Activated CD4-positive, alpha-beta T cell treated with anti-CD3 and anti-CD28 coated beads, Interleukin-2, amount 10 ng/mL, durations not matched to agents 7 days and 5 days (primary cell): ENCODE measurements at regions of chr7 and their contacts with region 1.

Region 1: DNA sequence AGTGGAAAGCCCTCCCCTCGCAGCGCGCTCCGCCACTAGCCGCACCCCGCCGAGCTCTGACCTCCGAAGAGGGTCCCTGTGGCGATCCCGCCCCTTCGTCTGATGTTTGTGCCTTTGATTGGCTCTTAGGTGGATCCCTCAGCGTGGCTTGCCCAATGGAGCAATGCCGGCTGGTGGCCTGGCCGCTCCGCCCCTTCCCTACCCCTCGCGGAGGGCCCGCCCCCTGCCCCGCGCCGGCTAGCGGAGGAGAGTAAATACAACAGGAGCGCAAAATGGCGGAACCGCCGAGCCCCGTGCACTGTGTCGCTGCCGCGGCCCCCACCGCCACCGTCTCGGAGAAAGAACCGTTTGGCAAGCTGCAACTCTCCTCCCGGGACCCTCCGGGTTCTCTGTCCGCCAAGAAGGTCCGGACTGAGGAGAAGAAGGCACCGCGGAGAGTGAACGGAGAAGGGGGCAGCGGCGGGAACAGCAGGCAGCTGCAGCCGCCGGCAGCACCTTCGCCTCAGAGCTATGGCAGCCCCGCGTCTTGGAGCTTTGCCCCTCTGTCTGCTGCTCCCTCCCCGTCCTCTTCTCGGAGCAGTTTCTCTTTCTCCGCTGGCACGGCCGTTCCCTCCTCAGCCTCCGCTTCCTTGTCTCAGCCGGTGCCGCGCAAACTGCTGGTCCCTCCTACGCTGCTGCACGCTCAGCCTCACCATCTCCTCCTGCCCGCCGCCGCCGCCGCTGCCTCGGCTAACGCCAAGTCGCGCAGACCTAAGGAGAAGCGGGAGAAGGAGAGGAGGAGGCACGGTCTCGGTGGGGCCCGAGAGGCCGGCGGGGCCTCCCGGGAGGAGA is at the start of gene RSBN1L:
- DNase-seq: peak; percentile 98
- H3K4me3 Mint-ChIP-seq: peak within 1 kb of the TSS; percentile 99
- H3K27ac Mint-ChIP-seq: peak within 1 kb of the TSS; percentile 98
- H3K4me1 Mint-ChIP-seq: peaks cover 53% of the 10 kb centered on the region
- H3K27me3 Mint-ChIP-seq: no peaks in the 10 kb centered on the region
- total RNA-seq, gene RSBN1L: 30.2 to 32.6 TPM

Region 2: DNA sequence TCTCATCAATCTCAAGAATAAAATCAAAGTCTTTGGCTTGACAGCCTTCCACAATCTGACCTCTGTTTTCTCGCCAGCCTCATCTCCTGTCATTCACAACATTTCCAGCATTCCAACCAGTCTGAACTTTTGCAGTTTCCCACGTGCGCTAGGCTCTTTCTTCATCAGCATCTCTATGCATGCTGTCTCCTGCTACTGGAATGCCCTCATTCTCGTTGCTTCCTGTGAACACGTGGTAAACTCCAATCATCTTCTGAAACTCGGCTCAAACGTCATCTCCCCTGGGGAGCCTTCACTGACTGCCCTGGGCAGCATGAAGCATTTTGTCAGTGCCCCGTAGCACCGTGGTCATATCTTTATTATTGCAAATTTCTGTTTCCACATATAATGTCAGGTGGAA is 12.4 kb before region 1 on chr7:
- CTCF ChIA-PET with region 1: interaction called, 15 read pairs
- POLR2A ChIA-PET with region 1: no interaction called
- DNase-seq: no peak
- H3K4me3 Mint-ChIP-seq: no peak overlapping the region
- H3K27ac Mint-ChIP-seq: no peak overlapping the region
- H3K4me1 Mint-ChIP-seq: peaks cover 30% of the 10 kb centered on the region
- H3K27me3 Mint-ChIP-seq: no peaks in the 10 kb centered on the region